ENCODE measurements at regions of chr12 and their contacts with region 1.

Region 1: DNA sequence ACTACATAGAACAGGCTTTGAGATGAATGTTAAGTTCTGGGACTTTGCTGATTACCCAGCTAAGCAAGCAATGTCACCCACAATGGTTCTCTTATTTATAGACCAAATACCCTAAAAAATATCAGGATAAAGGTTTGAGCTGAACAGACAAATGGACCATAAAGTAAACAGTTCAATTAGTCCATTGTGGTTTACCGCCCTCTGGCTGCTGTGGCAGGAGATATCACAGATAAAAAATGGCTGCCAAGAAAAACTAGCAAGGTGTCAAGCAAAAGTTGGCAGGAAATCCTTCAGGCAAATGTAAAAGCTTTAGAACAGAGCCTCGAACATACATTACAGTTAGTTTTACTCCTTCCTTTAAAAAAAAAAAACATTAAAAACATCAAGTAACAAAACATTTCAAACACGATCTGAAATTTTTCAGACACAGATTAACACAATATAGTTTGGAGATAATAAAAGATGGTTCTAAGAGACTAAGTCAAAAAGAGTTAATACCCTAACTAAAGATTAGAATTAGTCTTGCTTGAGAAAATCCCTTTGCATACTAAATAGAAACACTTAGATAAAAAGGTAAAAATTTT is 41.3 kb downstream of the MED13L start:
- DNase-seq: peak; percentile 33
- H3K4me3 ChIP-seq: no peak overlapping the region
- H3K27ac ChIP-seq: no peak overlapping the region
- H3K4me1 ChIP-seq: peaks cover 56% of the 10 kb centered on the region
- H3K27me3 ChIP-seq: no peaks in the 10 kb centered on the region
- CTCF ChIP-seq: peak; percentile 85

Region 2: DNA sequence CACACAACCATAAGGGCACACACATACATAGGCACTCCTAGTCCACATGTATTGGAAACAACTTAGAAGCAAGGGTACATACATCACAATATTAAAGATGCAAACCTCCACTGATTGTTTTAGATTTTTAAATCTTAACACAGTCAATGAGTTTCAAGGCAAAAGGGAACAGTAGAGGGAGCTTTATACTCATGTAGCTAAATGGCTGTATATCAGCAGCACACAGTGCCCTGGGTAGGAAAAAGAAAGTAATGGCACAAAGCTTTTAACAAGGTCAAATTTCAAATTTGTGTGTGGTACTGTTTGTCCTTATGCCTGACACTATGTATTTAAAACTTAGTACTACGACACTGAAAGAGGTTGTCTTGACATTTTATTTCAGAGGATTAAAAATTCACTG is 220.7 kb before region 1 on chr12:
- intact Hi-C with region 1: loop called (anchors 5 kb)
- DNase-seq: no peak
- H3K4me3 ChIP-seq: no peak overlapping the region
- H3K27ac ChIP-seq: no peak overlapping the region
- H3K4me1 ChIP-seq: peaks cover 28% of the 10 kb centered on the region
- H3K27me3 ChIP-seq: no peaks in the 10 kb centered on the region
- CTCF ChIP-seq: peak; percentile 71

Region 3: GRCh38 chr12:116026768-116027550 is 209.3 kb before region 1 on chr12:
- intact Hi-C with region 1: no loop called
- DNase-seq: no peak
- H3K4me3 ChIP-seq: no peak overlapping the region
- H3K27ac ChIP-seq: no peak overlapping the region
- H3K4me1 ChIP-seq: peaks cover 44% of the 10 kb centered on the region
- H3K27me3 ChIP-seq: no peaks in the 10 kb centered on the region
- CTCF ChIP-seq: no peak

Region 4: DNA sequence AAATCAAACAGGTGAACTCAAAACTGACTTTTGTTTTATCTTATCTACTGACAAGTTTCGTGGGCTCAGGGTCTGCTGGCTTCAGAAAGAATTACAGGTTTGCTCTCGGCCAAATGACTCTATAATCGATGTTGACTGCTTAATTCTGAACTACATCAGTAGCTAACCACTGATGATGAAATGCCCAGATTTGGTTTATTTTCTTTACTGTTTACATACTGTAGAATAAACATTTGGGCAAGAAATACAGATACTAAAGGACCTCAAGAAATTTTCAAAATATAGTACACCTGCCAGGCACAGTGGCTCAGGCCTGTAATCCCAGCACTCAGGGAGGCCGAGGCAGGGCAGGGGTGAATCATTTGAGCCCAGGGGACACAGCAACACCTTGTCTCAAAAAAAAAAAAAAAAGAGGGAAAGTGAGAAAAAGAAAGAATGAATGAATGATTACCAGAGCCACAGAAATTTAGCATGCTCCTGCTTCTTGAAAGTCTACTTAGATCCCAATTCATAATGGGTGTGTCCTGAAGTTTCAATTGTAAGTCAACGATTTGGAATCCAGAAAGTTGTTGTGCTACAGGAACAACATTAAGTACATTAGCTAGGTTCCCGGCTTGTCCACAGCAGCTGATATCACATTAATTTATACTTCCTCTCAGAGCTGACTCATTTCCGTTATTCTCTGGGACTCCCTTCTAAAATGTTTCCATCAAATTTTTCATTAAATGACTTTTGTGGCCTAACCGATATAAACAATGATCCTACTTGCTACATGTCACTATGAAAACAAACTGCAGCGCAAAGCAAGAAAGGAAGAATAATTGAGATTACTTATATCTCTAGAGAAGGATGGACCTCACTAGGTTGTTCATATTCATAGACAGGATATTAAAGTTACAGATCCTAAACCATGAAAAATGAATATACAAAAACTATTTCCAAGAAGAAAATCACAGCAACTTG is 93.0 kb before region 1 on chr12:
- intact Hi-C with region 1: loop called (anchors 10 kb)
- DNase-seq: no peak
- H3K4me3 ChIP-seq: no peak overlapping the region
- H3K27ac ChIP-seq: peak overlapping the region; percentile 43
- H3K4me1 ChIP-seq: peaks cover 71% of the 10 kb centered on the region
- H3K27me3 ChIP-seq: no peaks in the 10 kb centered on the region
- CTCF ChIP-seq: no peak

Region 5: DNA sequence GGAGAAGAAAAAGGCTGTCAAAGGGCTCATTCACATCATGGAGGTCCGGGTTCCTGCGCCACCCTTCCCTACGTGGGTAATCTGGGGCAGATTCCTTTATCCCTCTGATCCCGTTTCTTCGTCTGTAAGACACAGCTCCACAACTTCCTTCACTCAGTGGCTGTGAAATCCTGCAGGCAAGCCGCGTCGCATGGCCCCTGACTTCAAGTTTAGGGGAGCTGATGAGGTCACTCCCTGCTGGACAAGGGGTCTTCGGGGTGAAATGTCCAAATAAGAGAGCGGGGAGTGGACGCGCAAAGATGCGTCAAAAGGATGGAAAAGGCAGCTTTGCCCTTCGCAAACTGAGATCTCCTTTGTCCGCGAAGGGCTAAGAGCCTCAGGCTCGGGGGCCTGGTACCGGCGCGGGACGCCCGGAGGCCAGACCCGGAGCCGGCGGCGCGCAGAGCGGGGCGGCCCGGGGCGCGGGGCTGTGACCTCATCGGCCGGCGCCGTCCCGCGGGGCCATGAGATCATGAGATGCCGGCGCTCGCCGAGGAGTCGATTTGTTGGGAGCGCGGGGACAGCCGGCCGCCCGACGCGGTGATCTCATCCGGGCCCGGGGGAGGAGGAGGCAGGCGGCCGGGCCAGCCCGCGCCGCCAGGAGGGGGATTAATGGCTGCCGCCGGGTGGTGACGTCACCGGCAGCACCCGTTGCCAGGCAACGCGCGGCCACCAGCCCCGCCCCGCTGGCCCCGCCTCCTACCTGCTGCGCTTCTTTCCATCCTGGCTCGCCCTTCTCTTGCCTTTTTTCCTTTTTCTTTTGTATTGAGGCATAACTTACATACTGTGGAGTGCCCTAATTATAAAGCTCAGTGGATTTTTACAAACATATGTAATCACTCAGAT is 583.0 kb after region 1 on chr12:
- intact Hi-C with region 1: no loop called
- DNase-seq: peak; percentile 90
- H3K4me3 ChIP-seq: peak overlapping the region; percentile 87
- H3K27ac ChIP-seq: peak overlapping the region; percentile 98
- H3K4me1 ChIP-seq: peaks cover 13% of the 10 kb centered on the region
- H3K27me3 ChIP-seq: no peaks in the 10 kb centered on the region
- CTCF ChIP-seq: peak; percentile 22